Activated CD4-positive, alpha-beta T cell treated with anti-CD3 and anti-CD28 coated beads for 36 hours (primary cell): ENCODE measurements at regions of chr4 and their contacts with region 1.

Region 1: GRCh38 chr4:109754093-109754857 is 24.4 kb upstream of the PLA2G12A start:
- DNase-seq: no peak
- ATAC-seq: peak; percentile 77
- H3K4me3 Mint-ChIP-seq: no peak overlapping the region
- H3K27ac Mint-ChIP-seq: no peak overlapping the region
- H3K4me1 Mint-ChIP-seq: no peaks in the 10 kb centered on the region
- H3K27me3 Mint-ChIP-seq: peaks cover 4% of the 10 kb centered on the region

Region 2: DNA sequence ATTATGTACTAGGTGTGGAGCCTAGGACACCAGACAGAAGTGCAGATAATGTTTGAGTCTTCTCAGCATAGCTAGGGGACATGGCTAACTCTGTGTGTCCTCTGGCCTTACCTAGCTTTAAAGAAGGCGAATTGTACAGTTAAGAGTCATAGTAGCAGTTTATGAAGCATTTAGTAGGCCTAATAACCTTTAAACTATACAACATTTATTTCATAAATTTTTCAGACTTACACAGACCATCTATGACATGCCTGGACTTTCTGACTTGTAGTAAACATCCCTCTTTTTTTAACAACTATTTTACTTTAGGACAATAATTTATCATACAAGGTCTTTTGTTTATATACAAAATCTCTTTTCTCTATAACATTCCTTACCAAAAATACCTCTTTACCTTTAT is 1028.8 kb before region 1 on chr4:
- CTCF ChIA-PET with region 1: no interaction called
- POLR2A ChIA-PET with region 1: interaction called, 12 read pairs
- intact Hi-C with region 1: no loop called
- DNase-seq: no peak
- ATAC-seq: no peak
- H3K4me3 Mint-ChIP-seq: no peak overlapping the region
- H3K27ac Mint-ChIP-seq: no peak overlapping the region
- H3K4me1 Mint-ChIP-seq: no peaks in the 10 kb centered on the region
- H3K27me3 Mint-ChIP-seq: peaks cover 5% of the 10 kb centered on the region

Region 3: GRCh38 chr4:109547394-109547793 is 206.9 kb before region 1 on chr4:
- CTCF ChIA-PET with region 1: no interaction called
- POLR2A ChIA-PET with region 1: no interaction called
- intact Hi-C with region 1: no loop called
- DNase-seq: no peak
- ATAC-seq: no peak
- H3K4me3 Mint-ChIP-seq: no peak overlapping the region
- H3K27ac Mint-ChIP-seq: no peak overlapping the region
- H3K4me1 Mint-ChIP-seq: peaks cover 24% of the 10 kb centered on the region
- H3K27me3 Mint-ChIP-seq: no peaks in the 10 kb centered on the region

Region 4: DNA sequence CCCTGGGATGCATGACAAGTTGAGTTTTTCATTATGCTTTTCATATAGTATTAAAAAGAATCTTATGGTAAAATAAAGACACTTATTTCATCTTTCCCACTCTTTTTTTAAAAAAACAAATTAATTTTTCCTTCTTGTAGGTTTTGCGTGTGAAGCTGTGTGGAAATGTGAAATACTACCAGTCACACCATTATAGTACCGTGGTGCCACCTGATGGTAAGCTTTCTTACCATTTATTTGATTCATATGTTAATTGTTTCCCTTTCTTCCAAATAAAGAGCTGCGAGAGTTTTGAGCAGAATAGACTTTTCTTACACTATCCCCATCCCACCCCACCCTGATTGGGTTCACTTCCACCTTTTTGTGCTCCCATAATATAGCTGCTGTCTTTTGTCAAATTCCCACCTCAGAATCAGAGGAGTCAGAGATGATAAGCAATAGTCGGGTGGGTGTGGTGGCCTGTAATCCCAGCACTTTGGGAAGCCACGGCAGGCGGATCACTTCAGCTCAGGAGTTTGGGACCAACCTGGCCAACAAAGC is 95.3 kb before region 1 on chr4:
- CTCF ChIA-PET with region 1: no interaction called
- POLR2A ChIA-PET with region 1: no interaction called
- intact Hi-C with region 1: no loop called
- DNase-seq: peak; percentile 29
- ATAC-seq: no peak
- H3K4me3 Mint-ChIP-seq: no peak overlapping the region
- H3K27ac Mint-ChIP-seq: peak overlapping the region; percentile 37
- H3K4me1 Mint-ChIP-seq: peaks cover 36% of the 10 kb centered on the region
- H3K27me3 Mint-ChIP-seq: no peaks in the 10 kb centered on the region